Ascending aorta (tissue), 2 donors: ENCODE measurements at regions of chr1 and their contacts with region 1.

Region 1: DNA sequence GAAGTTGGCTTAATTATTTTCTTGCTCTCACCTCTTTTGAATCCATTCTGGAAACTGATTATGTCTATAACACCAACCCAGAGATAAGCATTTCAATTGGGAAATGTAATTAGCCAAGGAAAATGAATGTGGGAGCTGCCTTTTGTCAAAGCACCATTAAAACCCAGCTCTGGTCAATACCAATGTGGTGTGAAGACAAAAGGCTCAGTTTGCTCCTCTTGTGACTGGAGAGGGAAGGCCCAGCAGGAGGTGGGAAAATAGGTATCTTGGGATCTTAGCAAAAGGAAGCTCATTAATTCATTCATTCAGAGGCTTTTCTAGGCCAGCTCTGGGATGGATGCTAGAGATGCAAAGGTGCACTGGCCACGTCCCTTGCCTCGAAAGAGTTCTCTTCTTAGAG is 75.0 kb upstream of the SELENON start:
- DNase-seq: no peak
- H3K4me3 ChIP-seq: no peak overlapping the region
- H3K27ac ChIP-seq: no peak overlapping the region
- H3K4me1 ChIP-seq: peaks cover 0 to 10% of the 10 kb centered on the region in 2 donors
- H3K27me3 ChIP-seq: no peaks in the 10 kb centered on the region
- CTCF ChIP-seq: no peak

Region 2: GRCh38 chr1:25658791-25659431 is 66.1 kb before region 1 on chr1:
- intact Hi-C with region 1: loop called (anchors 5 kb)
- DNase-seq: peak in 1 of 2 donors; percentile 83
- H3K4me3 ChIP-seq: no peak overlapping the region
- H3K27ac ChIP-seq: peak overlapping the region in 1 of 2 donors; percentile 24
- H3K4me1 ChIP-seq: peaks cover 4 to 11% of the 10 kb centered on the region in 2 donors
- H3K27me3 ChIP-seq: no peaks in the 10 kb centered on the region
- CTCF ChIP-seq: no peak

Region 3: DNA sequence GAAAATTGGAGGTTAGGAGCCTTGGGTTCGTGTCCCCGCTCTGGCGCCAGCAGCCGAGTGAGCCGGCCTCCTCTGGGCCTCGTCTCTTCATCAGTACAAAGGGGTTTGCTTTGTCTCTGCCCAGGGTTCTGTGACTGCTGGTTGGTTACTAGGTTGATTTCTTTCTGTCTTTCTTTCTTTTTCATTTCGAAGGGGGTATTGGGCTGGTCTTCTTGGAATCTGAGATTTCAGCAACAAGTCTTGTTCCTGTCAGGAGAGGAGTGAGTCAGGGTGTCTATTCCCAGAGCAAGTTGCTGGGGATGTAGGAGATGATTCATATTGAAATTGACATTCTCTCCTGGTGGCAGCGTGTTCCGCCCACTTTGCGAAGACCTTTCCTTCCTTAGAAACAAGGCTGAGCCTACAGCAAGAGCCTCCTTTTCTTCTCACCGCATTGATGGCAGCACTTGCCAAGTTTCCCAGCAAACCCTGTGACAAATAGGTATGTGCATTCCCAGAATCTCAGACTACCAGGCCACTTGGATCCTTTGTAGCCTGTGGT is 29.1 kb before region 1 on chr1:
- intact Hi-C with region 1: no loop called
- DNase-seq: peak in 1 of 2 donors; percentile 79
- H3K4me3 ChIP-seq: no peak overlapping the region
- H3K27ac ChIP-seq: peak overlapping the region; percentile 78 to 83
- H3K4me1 ChIP-seq: peaks cover 10 to 49% of the 10 kb centered on the region in 2 donors
- H3K27me3 ChIP-seq: no peaks in the 10 kb centered on the region
- CTCF ChIP-seq: no peak